Activated B cell treated with CpG ODN at 0.5 μM for 24 hours (primary cell): ENCODE measurements at regions of chr18 and their contacts with region 1.

Region 1: DNA sequence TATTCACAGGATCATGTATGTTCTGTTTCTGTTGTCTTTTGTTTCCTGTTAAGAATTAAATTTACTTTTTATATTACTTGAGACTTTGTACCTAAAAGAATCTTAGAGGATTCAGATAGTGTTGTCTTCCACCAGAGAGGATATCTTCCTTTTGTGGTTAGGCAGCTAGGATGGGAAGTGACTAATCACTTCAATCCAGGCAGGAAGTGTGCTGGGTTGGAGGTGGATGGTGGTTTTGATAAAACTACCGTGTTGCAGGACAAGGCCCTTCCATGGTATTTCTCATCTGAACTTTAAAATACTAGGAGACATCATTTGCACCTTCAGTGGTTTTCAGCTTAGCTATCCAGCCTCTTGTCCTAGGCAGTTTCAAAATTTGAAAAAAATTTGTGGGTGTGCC is 728.6 kb upstream of the CDH2 start:
- DNase-seq: no peak
- ATAC-seq: no peak
- H3K4me3 Mint-ChIP-seq: no peak overlapping the region
- H3K27ac Mint-ChIP-seq: no peak overlapping the region
- H3K4me1 Mint-ChIP-seq: no peaks in the 10 kb centered on the region
- H3K27me3 Mint-ChIP-seq: no peaks in the 10 kb centered on the region
- CTCF ChIP-seq: no peak

Region 2: GRCh38 chr18:28846958-28847357 is 58.6 kb before region 1 on chr18:
- CTCF ChIA-PET with region 1: no interaction called
- POLR2A ChIA-PET with region 1: no interaction called
- intact Hi-C with region 1: loop called (anchors 10 kb)
- DNase-seq: no peak
- ATAC-seq: no peak
- H3K4me3 Mint-ChIP-seq: no peak overlapping the region
- H3K27ac Mint-ChIP-seq: no peak overlapping the region
- H3K4me1 Mint-ChIP-seq: no peaks in the 10 kb centered on the region
- H3K27me3 Mint-ChIP-seq: no peaks in the 10 kb centered on the region
- CTCF ChIP-seq: no peak